Activated CD8-positive, alpha-beta T cell treated with anti-CD3 and anti-CD28 coated beads, Interleukin-2, amount 10 ng/mL, durations not matched to agents 7 days and 5 days (primary cell): ENCODE measurements at regions of chr5 and their contacts with region 1.

Region 1: DNA sequence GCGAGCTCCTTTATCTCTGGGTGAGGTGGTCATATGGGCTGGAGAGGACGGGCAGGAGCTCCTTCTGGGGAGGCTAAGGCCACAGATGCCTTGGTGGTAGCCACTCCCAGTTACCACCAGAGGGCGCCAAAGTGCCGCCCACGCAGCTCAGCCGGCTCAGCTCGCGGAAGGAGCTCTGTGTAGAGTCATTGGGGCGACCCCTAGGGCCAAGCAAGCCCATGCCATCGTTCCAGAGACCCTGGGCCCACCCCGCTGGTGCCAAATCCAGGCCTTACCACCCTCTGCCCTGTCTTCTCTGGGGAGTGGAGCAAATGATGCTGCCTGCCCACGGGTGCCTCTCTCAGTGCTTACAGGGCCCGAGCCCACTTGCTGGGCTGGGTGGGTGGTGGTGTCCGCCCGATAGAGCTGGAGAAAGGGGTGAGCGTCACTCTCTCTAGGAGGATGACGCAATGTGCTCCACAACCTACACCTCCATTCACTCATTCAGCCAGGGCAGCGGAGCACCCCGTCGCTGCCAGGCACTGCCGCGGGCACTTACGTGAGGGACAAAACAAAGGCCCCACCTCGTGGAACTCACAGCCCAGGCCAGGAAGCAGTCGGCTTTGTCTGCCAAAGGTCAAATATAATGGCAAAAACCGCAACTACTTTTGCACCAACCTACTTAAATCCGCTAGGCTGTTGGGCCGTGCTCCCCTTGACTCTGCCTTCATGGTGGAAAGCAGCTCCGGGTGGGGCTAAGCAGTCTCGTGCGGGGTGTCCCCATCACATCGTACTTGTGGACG is 13.8 kb downstream of the TSPAN17 start:
- DNase-seq: peak; percentile 85
- ATAC-seq: peak; percentile 84
- H3K4me3 Mint-ChIP-seq: no peak overlapping the region
- H3K27ac Mint-ChIP-seq: no peak overlapping the region
- H3K4me1 Mint-ChIP-seq: peaks cover 31% of the 10 kb centered on the region
- H3K27me3 Mint-ChIP-seq: peaks cover 5% of the 10 kb centered on the region

Region 2: DNA sequence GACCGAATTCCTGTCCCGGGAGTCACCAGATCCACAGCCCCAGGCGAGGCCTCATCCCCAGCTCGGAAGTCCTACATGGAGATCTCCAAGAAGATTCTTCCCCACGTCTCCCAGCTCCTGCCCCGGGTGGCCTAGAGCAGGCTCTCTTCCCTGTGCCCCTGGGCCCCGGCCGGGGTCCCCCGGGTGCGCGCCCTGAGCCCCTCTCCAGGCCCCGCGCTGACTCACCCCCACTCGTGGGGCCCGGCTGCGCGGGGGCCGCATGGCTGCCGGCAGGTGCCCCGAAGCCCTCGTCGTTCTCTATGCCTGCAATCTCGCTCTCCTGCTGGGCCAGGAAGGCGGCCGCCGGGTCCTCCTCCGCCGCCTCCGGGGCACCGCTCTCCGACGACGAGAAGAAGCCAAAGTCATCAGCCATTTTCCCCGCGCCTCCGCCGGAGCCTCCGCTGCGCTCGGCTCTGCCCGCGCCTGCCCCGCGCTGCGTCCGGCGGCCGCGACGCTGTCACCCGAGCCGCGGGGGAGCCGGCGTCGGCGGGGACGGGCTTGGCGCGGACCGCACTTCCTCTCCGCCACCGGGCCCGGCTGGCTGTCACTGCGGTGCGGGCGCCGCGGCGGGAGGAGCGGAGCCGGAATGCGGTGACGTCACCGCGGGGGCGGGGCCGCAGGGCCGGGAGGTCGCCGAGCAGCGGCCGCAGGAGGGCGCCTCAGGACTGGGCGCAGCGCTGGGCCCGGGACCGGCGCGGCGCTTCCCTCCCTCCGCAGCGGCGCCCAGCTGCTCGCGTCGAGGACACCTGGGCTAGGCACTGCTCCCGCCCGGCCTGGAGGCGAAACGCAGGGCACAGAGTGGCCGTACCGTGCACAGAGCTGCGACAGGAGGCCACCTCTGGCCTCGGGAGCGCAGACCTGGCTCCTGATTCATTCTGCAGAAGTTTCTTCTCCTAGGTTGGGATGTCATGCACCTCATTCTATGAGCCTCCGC is 244.8 kb before region 1 on chr5 and contains the start of gene CLTB:
- CTCF ChIA-PET with region 1: interaction called, 10 read pairs
- POLR2A ChIA-PET with region 1: no interaction called
- DNase-seq: peak; percentile 89
- ATAC-seq: peak; percentile 97
- H3K4me3 Mint-ChIP-seq: peak within 1 kb of the TSS; percentile 77
- H3K27ac Mint-ChIP-seq: peak within 1 kb of the TSS; percentile 76
- H3K4me1 Mint-ChIP-seq: peaks cover 29% of the 10 kb centered on the region
- H3K27me3 Mint-ChIP-seq: peaks cover 12% of the 10 kb centered on the region
- total RNA-seq, gene CLTB: 65.4 to 67.7 TPM

Region 3: GRCh38 chr5:176629853-176630712 is 31.0 kb before region 1 on chr5 and contains the starts of genes EIF4E1B and SNCB:
- CTCF ChIA-PET with region 1: interaction called, 15 read pairs
- POLR2A ChIA-PET with region 1: no interaction called
- DNase-seq: peak; percentile 64
- ATAC-seq: peak; percentile 94
- H3K4me3 Mint-ChIP-seq: peak within 1 kb of the TSS; percentile 11
- H3K27ac Mint-ChIP-seq: peak within 1 kb of the TSS; percentile 19
- H3K4me1 Mint-ChIP-seq: peaks cover 25% of the 10 kb centered on the region
- H3K27me3 Mint-ChIP-seq: peaks cover 68% of the 10 kb centered on the region
- total RNA-seq, gene EIF4E1B: not detected
- total RNA-seq, gene SNCB: not detected

Region 4: DNA sequence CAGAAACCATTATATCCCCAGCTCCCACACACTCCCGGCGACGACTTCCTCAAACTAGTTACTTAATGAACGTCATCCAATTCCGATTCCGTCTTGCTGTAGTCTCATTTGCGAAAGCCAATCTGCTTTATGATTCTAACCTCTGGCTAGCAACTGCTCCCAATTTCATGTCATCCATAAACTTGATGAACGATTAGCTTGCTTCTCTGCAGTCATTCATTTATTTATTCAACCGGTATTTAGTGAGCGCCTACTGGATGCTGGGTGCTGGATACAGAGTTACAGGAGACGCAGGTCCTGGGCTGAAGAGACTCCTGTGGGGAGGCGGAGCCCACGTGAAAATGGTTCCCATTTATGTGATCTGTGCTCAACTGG is 32.4 kb after region 1 on chr5:
- CTCF ChIA-PET with region 1: interaction called, 11 read pairs
- POLR2A ChIA-PET with region 1: no interaction called
- DNase-seq: no peak
- ATAC-seq: no peak
- H3K4me3 Mint-ChIP-seq: no peak overlapping the region
- H3K27ac Mint-ChIP-seq: no peak overlapping the region
- H3K4me1 Mint-ChIP-seq: no peaks in the 10 kb centered on the region
- H3K27me3 Mint-ChIP-seq: peaks cover 59% of the 10 kb centered on the region

Region 5: GRCh38 chr5:176908675-176909368 is 247.8 kb after region 1 on chr5:
- CTCF ChIA-PET with region 1: interaction called, 16 read pairs
- POLR2A ChIA-PET with region 1: no interaction called
- DNase-seq: no peak
- ATAC-seq: no peak
- H3K4me3 Mint-ChIP-seq: no peak overlapping the region
- H3K27ac Mint-ChIP-seq: no peak overlapping the region
- H3K4me1 Mint-ChIP-seq: no peaks in the 10 kb centered on the region
- H3K27me3 Mint-ChIP-seq: no peaks in the 10 kb centered on the region

Region 6: DNA sequence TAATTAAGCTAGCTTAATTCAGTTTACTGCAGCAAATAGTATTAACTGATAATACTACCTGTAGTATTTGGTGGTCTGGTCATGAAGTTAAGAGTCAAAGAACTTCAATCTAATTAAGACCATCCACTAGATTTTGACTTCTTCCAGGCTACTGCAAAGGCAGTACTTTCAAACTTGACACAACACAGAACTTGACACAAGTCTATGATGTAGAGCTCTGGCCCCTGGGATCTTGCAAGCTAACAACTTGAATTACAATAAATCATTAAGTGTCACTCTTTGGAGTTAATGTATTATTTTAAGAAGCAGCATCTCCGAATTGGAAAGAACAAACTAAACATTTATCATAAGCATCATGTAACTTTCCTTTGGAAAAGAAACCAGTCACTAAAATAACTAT is 304.6 kb after region 1 on chr5:
- CTCF ChIA-PET with region 1: interaction called, 15 read pairs
- POLR2A ChIA-PET with region 1: no interaction called
- DNase-seq: no peak
- ATAC-seq: no peak
- H3K4me3 Mint-ChIP-seq: no peak overlapping the region
- H3K27ac Mint-ChIP-seq: no peak overlapping the region
- H3K4me1 Mint-ChIP-seq: no peaks in the 10 kb centered on the region
- H3K27me3 Mint-ChIP-seq: no peaks in the 10 kb centered on the region